GM12878 (cell line): ENCODE measurements at regions of chr6 and their contacts with region 1.

Region 1: GRCh38 chr6:44074439-44075136 is 52.7 kb downstream of the MRPL14 start:
- DNase-seq: peak; percentile 75
- ATAC-seq: peak; percentile 71
- H3K4me3 ChIP-seq: peak overlapping the region; percentile 92
- H3K27ac ChIP-seq: peak overlapping the region; percentile 85
- H3K4me1 ChIP-seq: peaks cover 52% of the 10 kb centered on the region
- H3K27me3 ChIP-seq: no peaks in the 10 kb centered on the region
- CTCF ChIP-seq: peak; percentile 87 to 91 (median 89)
- EP300 ChIP-seq: peak; percentile 36 to 44; a peak in 1 of 4 replicates
- POLR2A ChIP-seq: no peak; the same call in 1 of the 2 replicates
- RAD21 ChIP-seq: peak; percentile 78

Region 2: GRCh38 chr6:43667245-43668150 is 407.1 kb before region 1 on chr6:
- CTCF ChIA-PET with region 1: interaction called, 85 read pairs
- POLR2A ChIA-PET with region 1: interaction called, 3 read pairs
- RAD21 ChIA-PET with region 1: interaction called, 79 read pairs
- SMC1A ChIA-PET with region 1: interaction called, 37 read pairs
- in situ Hi-C with region 1: loop called (anchors 5 kb)
- intact Hi-C with region 1: loop called (anchors 1 kb)
- DNase-seq: no peak
- ATAC-seq: peak; percentile 84
- H3K4me3 ChIP-seq: no peak overlapping the region
- H3K27ac ChIP-seq: peak overlapping the region; percentile 69
- H3K4me1 ChIP-seq: peaks cover 38% of the 10 kb centered on the region
- H3K27me3 ChIP-seq: no peaks in the 10 kb centered on the region
- CTCF ChIP-seq: peak; percentile 95 to 99 (median 95)
- EP300 ChIP-seq: no peak
- POLR2A ChIP-seq: peak; percentile 70
- RAD21 ChIP-seq: peak; percentile 92

Region 3: GRCh38 chr6:43723737-43724295 is 350.8 kb before region 1 on chr6:
- CTCF ChIA-PET with region 1: interaction called, 102 read pairs
- POLR2A ChIA-PET with region 1: interaction called, 15 read pairs
- RAD21 ChIA-PET with region 1: interaction called, 76 read pairs
- SMC1A ChIA-PET with region 1: interaction called, 87 read pairs
- in situ Hi-C with region 1: loop called (anchors 5 kb)
- intact Hi-C with region 1: loop called (anchors 1 kb)
- DNase-seq: no peak
- ATAC-seq: peak; percentile 88
- H3K4me3 ChIP-seq: no peak overlapping the region
- H3K27ac ChIP-seq: no peak overlapping the region
- H3K4me1 ChIP-seq: peaks cover 24% of the 10 kb centered on the region
- H3K27me3 ChIP-seq: no peaks in the 10 kb centered on the region
- CTCF ChIP-seq: peak; percentile 76 to 93 (median 81)
- EP300 ChIP-seq: no peak
- POLR2A ChIP-seq: no peak
- RAD21 ChIP-seq: peak; percentile 82

Region 4: DNA sequence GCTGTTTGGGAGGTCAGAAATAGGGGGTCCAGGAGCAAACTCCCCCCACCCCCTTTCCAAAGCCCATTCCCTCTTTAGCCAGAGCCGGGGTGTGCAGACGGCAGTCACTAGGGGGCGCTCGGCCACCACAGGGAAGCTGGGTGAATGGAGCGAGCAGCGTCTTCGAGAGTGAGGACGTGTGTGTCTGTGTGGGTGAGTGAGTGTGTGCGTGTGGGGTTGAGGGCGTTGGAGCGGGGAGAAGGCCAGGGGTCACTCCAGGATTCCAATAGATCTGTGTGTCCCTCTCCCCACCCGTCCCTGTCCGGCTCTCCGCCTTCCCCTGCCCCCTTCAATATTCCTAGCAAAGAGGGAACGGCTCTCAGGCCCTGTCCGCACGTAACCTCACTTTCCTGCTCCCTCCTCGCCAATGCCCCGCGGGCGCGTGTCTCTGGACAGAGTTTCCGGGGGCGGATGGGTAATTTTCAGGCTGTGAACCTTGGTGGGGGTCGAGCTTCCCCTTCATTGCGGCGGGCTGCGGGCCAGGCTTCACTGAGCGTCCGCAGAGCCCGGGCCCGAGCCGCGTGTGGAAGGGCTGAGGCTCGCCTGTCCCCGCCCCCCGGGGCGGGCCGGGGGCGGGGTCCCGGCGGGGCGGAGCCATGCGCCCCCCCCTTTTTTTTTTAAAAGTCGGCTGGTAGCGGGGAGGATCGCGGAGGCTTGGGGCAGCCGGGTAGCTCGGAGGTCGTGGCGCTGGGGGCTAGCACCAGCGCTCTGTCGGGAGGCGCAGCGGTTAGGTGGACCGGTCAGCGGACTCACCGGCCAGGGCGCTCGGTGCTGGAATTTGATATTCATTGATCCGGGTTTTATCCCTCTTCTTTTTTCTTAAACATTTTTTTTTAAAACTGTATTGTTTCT is 304.8 kb before region 1 on chr6 and contains the start of gene VEGFA:
- CTCF ChIA-PET with region 1: interaction called, 264 read pairs
- POLR2A ChIA-PET with region 1: interaction called, 97 read pairs
- RAD21 ChIA-PET with region 1: interaction called, 179 read pairs
- SMC1A ChIA-PET with region 1: interaction called, 78 read pairs
- in situ Hi-C with region 1: loop called (anchors 5 kb)
- intact Hi-C with region 1: loop called (anchors 1 kb)
- DNase-seq: peak; percentile 64
- ATAC-seq: peak; percentile 68
- H3K4me3 ChIP-seq: peak within 1 kb of the TSS; percentile 98
- H3K27ac ChIP-seq: peak within 1 kb of the TSS; percentile 88
- H3K4me1 ChIP-seq: peaks cover 14% of the 10 kb centered on the region
- H3K27me3 ChIP-seq: no peaks in the 10 kb centered on the region
- CTCF ChIP-seq: peak; percentile 97 to 99 (median 98)
- EP300 ChIP-seq: no peak
- POLR2A ChIP-seq: peak; percentile 90
- RAD21 ChIP-seq: peak; percentile 98
- polyA plus RNA-seq, gene VEGFA: 2.9 to 4.3 TPM

Region 5: DNA sequence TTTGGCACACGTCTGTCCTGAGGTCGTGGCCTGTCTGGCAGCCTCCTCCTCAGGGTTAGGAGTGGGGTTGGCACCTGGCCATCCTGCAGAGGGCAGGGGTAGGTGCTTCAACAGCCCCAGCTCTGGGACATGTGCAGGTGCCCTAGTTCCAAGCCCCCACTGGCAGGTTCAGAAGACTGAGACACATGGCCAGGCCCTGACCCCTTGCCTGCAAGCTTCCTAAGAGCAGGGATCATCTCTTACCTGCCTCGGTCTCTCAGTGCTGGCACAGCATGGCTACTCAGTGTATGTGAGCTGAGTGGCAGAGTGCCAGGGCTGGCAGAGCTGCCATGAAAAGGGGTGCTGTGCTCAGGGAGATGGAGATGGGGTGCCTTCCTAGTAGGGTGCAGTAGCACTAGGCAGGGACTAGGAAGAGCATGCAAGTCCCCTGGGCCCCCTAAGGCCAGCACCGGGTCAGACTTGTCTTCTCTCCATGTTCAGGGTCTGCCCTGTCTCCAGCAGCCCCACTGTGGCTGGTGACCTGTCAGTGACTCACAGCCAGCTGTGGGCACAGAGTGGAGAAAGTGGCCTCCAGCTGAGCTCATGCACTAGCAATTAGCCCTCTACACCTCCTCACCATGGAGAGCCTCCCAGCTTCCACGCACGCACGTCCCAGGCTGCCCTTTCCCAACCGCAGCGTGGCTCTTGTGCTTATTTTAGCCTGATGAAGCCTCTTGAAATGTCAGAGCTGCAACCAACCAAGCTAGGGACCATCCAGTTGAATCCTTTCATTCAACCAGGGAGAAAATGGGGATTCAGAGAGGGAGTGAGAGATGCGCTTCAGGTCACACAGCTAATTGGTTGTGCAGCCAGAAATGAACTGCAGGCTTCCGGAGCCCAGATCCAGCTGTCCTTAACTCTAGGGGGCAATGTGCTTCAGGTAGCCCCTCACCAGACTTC is 63.9 kb before region 1 on chr6:
- CTCF ChIA-PET with region 1: interaction called, 32 read pairs
- POLR2A ChIA-PET with region 1: interaction called, 74 read pairs
- RAD21 ChIA-PET with region 1: interaction called, 138 read pairs
- SMC1A ChIA-PET with region 1: interaction called, 23 read pairs
- in situ Hi-C with region 1: no loop called
- intact Hi-C with region 1: no loop called
- DNase-seq: no peak
- ATAC-seq: peak; percentile 18
- H3K4me3 ChIP-seq: no peak overlapping the region
- H3K27ac ChIP-seq: no peak overlapping the region
- H3K4me1 ChIP-seq: no peaks in the 10 kb centered on the region
- H3K27me3 ChIP-seq: no peaks in the 10 kb centered on the region; a peak in 2 of 4 replicates
- CTCF ChIP-seq: no peak
- EP300 ChIP-seq: no peak
- POLR2A ChIP-seq: no peak
- RAD21 ChIP-seq: no peak

Region 6: GRCh38 chr6:44090465-44090864 is 15.9 kb after region 1 on chr6:
- CTCF ChIA-PET with region 1: interaction called, 15 read pairs
- POLR2A ChIA-PET with region 1: no interaction called
- RAD21 ChIA-PET with region 1: no interaction called
- SMC1A ChIA-PET with region 1: interaction called, 5 read pairs
- in situ Hi-C with region 1: no loop called
- intact Hi-C with region 1: no loop called
- DNase-seq: no peak
- ATAC-seq: no peak
- H3K4me3 ChIP-seq: no peak overlapping the region
- H3K27ac ChIP-seq: no peak overlapping the region
- H3K4me1 ChIP-seq: no peaks in the 10 kb centered on the region
- H3K27me3 ChIP-seq: no peaks in the 10 kb centered on the region
- CTCF ChIP-seq: no peak
- EP300 ChIP-seq: no peak
- POLR2A ChIP-seq: no peak
- RAD21 ChIP-seq: no peak

Region 7: GRCh38 chr6:44576132-44576631 is 501.6 kb after region 1 on chr6:
- CTCF ChIA-PET with region 1: no interaction called
- POLR2A ChIA-PET with region 1: no interaction called
- RAD21 ChIA-PET with region 1: no interaction called
- SMC1A ChIA-PET with region 1: no interaction called
- in situ Hi-C with region 1: no loop called
- intact Hi-C with region 1: no loop called
- DNase-seq: no peak
- ATAC-seq: no peak
- H3K4me3 ChIP-seq: no peak overlapping the region
- H3K27ac ChIP-seq: no peak overlapping the region
- H3K4me1 ChIP-seq: no peaks in the 10 kb centered on the region
- H3K27me3 ChIP-seq: no peaks in the 10 kb centered on the region; a peak in 1 of 4 replicates
- CTCF ChIP-seq: no peak
- EP300 ChIP-seq: no peak
- POLR2A ChIP-seq: no peak
- RAD21 ChIP-seq: no peak